ENCODE measurements at regions of chr18 and their contacts with region 1.

Region 1: GRCh38 chr18:58768293-58768974 is 96.2 kb upstream of the ZNF532 start:
- DNase-seq: no peak
- H3K4me3 ChIP-seq: peak overlapping the region; percentile 42
- CTCF ChIP-seq: peak; percentile 93

Region 2: GRCh38 chr18:58496937-58497336 is 271.5 kb before region 1 on chr18:
- CTCF ChIA-PET with region 1: interaction called, 40 read pairs
- POLR2A ChIA-PET with region 1: no interaction called
- DNase-seq: no peak
- H3K4me3 ChIP-seq: no peak overlapping the region
- CTCF ChIP-seq: peak; percentile 10

Region 3: DNA sequence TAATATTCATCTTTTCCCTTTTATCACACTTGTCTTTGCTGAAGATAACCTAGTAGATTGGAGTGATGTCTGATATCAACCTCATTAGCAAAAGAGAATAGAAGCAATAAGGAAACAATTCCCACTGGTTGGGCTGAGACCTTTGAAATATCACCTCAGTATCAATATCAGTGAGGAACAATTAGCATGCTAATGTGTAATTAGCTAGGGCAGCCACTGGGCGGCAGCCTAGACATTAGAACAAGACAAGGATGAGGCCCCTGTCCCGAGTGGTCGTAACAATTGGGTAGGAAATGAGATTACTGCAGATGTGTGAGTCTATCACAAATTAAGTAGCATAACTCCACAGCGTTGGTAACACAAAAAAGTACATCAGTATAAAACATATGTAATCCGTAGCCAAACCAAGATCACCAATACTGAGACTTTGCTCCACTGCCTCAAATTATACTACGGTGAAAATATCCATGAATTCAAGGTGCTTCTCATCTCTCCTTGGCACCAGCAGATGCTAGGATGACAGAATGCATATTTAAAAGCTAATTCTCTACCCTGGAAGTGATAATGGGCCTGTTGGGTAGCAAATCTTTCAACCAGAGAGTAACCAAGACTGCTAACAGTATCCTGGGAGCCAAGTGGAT is 238.6 kb before region 1 on chr18:
- CTCF ChIA-PET with region 1: interaction called, 168 read pairs
- POLR2A ChIA-PET with region 1: no interaction called
- DNase-seq: no peak
- H3K4me3 ChIP-seq: no peak overlapping the region
- CTCF ChIP-seq: peak; percentile 56

Region 4: DNA sequence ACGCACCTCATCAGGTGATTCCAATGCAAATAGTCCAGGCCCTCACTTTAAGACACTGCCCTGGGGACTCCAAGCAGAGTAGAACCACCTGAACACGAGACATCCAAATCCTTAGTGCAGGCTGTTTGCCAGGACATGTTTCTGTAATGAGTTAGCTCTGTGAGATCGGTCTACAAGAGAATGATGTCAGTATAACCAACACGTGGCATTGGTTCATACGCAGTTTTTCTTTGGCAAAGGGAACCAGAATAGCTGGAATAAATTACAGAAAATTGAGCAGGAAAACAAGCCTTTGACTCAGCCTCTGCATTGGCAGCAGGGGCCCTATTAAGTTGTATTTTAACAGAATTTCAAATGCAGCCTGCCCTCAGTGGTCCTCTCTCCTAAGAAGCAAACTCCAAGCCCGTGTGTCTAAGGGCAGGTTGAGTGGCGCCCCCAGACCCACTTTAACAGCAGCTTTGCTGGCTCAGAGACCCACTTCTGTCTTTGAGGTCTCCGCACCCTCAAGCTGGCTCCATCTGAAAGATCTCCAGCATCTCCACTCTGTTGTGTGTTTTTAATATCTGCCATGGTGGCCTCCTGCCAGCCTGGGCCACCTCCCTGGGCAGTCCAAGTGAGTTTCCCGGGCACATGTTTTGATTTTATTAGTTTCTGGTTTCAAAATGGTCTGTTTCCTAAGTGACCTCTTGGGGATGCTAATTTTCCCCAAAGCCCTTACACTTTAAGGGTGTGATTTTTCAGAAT is 200.8 kb before region 1 on chr18:
- CTCF ChIA-PET with region 1: interaction called, 15 read pairs
- POLR2A ChIA-PET with region 1: no interaction called
- DNase-seq: peak; percentile 93
- H3K4me3 ChIP-seq: no peak overlapping the region
- CTCF ChIP-seq: no peak

Region 5: GRCh38 chr18:58781627-58782194 is 13.3 kb after region 1 on chr18:
- CTCF ChIA-PET with region 1: interaction called, 87 read pairs
- POLR2A ChIA-PET with region 1: no interaction called
- DNase-seq: no peak
- H3K4me3 ChIP-seq: no peak overlapping the region
- CTCF ChIP-seq: peak; percentile 74

Region 6: GRCh38 chr18:58819051-58819450 is 50.6 kb after region 1 on chr18:
- CTCF ChIA-PET with region 1: no interaction called
- POLR2A ChIA-PET with region 1: no interaction called
- DNase-seq: no peak
- H3K4me3 ChIP-seq: no peak overlapping the region
- CTCF ChIP-seq: no peak

Region 7: DNA sequence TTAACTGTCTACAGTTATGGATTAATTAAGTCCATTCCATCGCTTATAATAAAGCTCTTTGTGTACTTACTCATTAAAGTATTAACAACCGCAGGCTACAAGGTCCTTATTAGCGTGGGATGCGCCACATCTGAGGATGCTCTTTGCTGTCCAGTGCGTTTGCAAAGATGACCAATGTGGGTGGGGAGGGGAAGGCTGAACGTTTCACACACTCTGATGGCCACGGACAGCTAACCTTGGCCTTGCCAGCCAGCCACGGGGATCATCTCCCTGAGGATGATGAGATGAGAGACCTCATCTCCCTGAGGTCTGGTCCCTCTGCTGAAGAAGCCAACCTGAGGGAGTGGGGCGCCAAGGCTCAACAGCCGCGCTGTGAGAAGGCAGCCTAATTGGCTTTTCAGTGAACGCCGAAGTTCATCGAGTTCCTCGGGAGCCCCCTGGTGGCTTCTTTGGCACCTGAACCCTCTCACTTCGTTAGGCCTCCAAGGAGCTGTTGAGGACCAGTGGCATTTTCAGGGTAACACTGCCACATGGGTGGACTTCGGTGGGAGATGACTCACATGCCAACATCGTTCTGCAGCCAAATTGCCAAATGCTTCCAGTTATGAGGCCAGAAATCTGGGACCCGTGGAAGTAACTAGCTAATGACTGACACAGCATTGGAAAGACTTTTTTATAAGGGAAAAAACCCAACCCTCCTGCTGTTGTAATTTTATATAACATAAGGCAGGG is 301.9 kb after region 1 on chr18:
- CTCF ChIA-PET with region 1: interaction called, 1,272 read pairs
- POLR2A ChIA-PET with region 1: no interaction called
- DNase-seq: no peak
- H3K4me3 ChIP-seq: no peak overlapping the region
- CTCF ChIP-seq: peak; percentile 90

Region 8: DNA sequence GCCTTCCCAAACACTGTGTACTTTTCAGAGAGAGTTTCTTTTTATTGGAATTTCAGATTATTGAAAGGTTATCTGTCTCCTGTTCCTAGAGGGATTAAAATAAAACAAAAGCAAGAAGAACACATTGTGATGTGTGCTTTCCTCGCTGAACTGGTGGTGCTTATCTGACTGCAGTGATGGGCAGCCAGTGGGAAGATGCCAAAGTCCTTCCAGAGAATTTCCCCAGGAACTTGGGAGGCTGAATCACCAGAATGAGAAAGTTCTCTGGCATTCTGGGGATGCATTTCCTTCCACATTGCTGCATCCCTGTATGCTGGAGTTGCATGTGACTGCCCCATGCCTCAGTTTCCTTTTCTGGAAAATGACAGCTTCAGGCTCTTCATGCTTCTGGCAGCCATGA is 317.4 kb after region 1 on chr18:
- CTCF ChIA-PET with region 1: interaction called, 36 read pairs
- POLR2A ChIA-PET with region 1: no interaction called
- DNase-seq: peak; percentile 17
- H3K4me3 ChIP-seq: no peak overlapping the region
- CTCF ChIP-seq: no peak

Measured in AG04449 (cell line).